HCT116 (cell line): ENCODE measurements at regions of chr10 and their contacts with region 1.

Region 1: DNA sequence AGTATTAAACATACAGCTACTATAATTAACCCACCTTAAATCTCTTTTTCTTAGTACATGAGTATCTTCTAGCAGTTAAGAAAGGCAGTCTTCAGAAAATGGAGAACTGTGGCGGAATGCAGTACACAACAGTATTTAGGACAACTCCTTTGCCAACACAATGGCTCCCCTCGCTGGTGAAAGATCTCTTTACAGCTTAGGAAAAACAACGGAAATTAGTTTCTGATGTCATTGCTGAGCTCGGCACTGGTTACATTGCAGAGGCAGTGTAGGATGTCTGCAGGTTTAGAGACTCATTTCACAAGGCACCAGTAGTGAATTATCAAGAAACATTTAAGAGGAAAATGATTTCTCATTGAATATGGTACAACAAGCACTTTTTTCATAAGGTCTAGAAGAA is 43.4 kb downstream of the GLRX3 start:
- DNase-seq: peak; percentile 24
- ATAC-seq: peak; percentile 79
- H3K4me3 ChIP-seq: no peak overlapping the region
- H3K27ac ChIP-seq: no peak overlapping the region
- H3K4me1 ChIP-seq: no peaks in the 10 kb centered on the region
- H3K27me3 ChIP-seq: no peaks in the 10 kb centered on the region
- CTCF ChIP-seq: peak; percentile 29 to 36 (median 33); a peak in 5 of 6 replicates
- POLR2A ChIP-seq: no peak
- RAD21 ChIP-seq: peak; percentile 64; the same call in 1 of the 2 replicates

Region 2: DNA sequence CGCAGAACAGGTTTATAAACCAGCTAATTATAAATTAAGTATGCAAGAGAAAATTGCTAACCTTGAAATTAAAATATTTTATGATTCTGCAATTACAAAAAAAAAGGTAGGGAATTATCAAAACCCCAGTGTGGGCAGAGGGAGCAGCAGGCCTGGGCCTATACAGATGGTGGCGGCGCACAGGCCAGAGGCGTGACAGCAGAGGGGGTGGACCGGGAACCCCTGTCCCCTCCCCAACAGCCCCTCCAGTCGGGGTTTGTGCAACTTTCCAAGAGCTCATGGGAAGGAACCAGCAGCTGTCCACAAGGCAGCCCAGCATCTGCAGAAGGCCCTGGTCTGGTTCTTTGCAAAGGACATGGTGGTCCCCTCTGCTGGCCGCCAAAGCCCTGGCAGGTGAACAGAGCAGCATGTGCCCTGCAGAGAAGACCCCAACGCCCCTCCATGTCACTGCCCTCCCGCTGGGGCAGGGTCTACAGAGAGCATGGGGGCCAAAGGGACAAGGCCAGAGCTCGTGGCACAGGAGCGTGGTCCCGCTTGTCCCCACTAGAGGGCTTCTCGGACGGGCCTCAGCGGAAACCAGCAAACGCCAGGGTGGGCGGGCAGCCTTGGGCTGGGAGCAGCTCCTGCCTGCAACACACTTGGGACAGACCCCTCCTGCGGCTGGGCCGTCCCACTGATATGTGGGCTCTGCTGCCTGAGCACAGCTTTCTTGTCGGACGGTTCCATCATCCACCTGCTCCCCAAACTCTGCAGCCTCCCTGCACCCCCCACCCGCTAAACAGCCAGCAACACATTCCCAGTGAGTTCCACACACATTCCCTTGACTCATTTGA is 290.6 kb before region 1 on chr10:
- CTCF ChIA-PET with region 1: interaction called, 3 read pairs
- POLR2A ChIA-PET with region 1: no interaction called
- RAD21 ChIA-PET with region 1: no interaction called
- intact Hi-C with region 1: loop called (anchors 10 kb)
- DNase-seq: no peak
- ATAC-seq: peak; percentile 97
- H3K4me3 ChIP-seq: no peak overlapping the region
- H3K27ac ChIP-seq: no peak overlapping the region
- H3K4me1 ChIP-seq: no peaks in the 10 kb centered on the region
- H3K27me3 ChIP-seq: no peaks in the 10 kb centered on the region
- CTCF ChIP-seq: peak; percentile 41 to 59 (median 55); a peak in 5 of 6 replicates
- POLR2A ChIP-seq: no peak
- RAD21 ChIP-seq: peak; percentile 32